ENCODE measurements at regions of chr6 and their contacts with region 1.

Region 1: DNA sequence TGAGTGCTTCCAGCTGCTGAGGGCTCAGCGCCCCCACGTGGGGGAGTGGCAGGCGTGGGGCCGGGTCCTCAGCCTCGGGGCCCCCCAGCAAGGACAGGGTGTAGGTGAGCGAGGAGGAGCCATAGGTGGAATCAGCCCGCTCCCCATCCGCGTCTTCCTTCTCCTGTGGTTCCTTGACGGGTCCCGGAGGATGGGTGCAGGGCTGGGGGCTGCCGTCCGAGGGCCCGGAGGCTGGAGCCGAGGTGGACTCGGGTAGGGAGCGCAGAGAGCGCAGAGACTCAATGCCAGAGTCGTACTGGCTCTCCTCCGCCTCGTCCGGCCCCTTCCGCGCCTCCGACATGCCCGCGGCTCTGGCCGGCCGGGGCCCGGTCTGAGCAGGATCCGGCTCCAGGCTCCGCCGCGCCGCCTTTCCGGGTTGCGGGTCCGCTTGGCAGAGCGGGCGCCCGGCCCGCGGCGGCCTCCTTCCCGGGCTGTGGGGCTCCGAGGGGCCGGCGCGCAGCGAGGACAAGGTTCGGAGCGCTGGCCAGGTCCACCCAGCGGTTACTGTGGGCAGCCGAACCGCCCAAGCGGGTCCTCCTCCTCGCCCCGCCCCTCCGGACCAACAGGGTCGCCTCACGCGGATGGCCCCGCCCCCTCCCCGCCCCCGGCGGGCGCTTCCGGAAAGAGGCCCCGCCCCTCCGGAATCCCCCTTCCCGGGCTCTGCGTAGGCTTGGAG is at the start of gene NFKBIE:
- DNase-seq: peak; percentile 93
- H3K4me3 Mint-ChIP-seq: peak within 1 kb of the TSS; percentile 98
- H3K27ac Mint-ChIP-seq: peak within 1 kb of the TSS; percentile 95
- H3K4me1 Mint-ChIP-seq: peaks cover 66% of the 10 kb centered on the region
- H3K27me3 Mint-ChIP-seq: peaks cover 15% of the 10 kb centered on the region
- total RNA-seq, gene NFKBIE: 23.2 and 29.0 TPM in 2 replicates

Region 2: DNA sequence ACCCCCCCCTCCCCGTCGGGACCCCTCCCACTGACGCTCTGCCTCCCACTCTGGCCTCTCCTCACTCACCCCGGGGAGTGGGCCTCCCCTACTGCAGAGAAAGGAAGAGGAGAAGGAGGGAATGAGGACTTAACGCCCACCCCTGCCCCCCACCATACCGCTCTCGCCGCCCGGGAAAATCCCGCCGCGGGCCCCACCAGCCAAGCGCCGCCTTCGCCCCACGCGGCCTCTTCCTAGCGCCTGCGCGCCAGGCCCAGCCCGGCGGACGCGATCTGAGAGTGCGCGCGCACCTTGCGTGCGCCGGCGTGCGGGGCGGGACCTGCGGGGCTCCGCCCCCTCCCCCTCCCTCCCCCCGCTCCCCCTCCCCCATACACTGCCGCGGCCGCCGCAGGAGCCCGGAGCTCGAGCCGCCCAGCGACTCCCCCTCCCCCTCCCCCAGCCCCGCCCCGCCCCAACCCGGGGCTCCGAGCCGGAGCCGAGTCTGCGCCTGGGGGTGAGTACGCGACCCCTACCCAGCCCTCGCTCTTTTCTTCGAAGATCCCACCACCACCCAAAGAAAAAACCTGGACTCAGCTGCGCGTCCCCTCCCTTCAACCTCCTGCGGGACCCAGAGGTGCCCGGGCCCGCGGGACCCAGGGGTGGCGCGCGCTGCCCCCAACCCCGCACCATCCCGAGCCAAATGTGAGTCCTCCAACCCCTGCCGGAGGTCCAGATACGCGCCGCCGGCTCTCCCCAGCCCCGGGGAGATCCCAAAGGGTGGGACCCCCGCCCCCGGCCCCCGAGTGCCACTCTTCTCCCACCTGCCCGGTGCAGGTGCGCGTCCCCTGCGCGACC is 137.8 kb before region 1 on chr6 and contains the starts of genes MRPL14 and TMEM63B:
- intact Hi-C with region 1: loop called (anchors 2 kb)
- DNase-seq: peak; percentile 89
- H3K4me3 Mint-ChIP-seq: peak within 1 kb of the TSS; percentile 90
- H3K27ac Mint-ChIP-seq: peak within 1 kb of the TSS; percentile 94
- H3K4me1 Mint-ChIP-seq: peaks cover 50% of the 10 kb centered on the region
- H3K27me3 Mint-ChIP-seq: no peaks in the 10 kb centered on the region
- total RNA-seq, gene MRPL14: 62.6 and 68.6 TPM in 2 replicates
- total RNA-seq, gene TMEM63B: 17.0 and 20.7 TPM in 2 replicates

Region 3: DNA sequence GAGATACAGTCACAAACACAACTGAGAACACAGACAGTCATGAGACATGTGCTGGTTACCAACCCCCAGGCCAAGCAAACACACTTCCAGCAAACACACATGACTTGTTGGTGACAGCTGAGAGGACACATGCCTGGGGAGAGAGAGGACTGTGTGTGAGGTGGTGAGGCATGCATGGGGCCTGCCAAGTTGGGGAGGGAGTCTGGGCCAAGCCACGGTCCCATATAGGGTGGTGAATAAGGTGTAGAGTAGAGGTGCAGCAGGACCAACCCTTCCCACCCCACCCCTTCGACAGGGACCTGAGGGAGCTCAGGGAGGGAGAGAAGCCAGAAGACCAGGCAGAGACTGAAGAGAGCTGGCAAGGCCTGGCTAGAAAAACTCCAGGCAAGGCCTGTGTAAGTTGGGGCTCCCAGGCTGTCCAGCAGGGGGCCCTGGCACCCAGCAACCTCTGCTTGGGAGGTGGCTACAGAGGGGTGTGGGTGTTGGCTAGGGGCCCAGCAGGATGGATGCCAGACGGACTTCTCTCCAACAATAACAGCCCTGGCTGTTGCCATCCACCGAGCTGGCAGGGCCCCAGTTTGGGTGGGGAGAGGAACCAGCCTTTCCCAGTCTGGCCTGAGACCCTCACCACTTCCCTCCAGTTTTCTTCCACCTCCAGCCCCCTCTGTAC is 43.7 kb before region 1 on chr6:
- intact Hi-C with region 1: loop called (anchors 1 kb)
- DNase-seq: peak; percentile 68
- H3K4me3 Mint-ChIP-seq: no peak overlapping the region
- H3K27ac Mint-ChIP-seq: peak overlapping the region; percentile 52
- H3K4me1 Mint-ChIP-seq: peaks cover 43% of the 10 kb centered on the region
- H3K27me3 Mint-ChIP-seq: peaks cover 11% of the 10 kb centered on the region

Region 4: DNA sequence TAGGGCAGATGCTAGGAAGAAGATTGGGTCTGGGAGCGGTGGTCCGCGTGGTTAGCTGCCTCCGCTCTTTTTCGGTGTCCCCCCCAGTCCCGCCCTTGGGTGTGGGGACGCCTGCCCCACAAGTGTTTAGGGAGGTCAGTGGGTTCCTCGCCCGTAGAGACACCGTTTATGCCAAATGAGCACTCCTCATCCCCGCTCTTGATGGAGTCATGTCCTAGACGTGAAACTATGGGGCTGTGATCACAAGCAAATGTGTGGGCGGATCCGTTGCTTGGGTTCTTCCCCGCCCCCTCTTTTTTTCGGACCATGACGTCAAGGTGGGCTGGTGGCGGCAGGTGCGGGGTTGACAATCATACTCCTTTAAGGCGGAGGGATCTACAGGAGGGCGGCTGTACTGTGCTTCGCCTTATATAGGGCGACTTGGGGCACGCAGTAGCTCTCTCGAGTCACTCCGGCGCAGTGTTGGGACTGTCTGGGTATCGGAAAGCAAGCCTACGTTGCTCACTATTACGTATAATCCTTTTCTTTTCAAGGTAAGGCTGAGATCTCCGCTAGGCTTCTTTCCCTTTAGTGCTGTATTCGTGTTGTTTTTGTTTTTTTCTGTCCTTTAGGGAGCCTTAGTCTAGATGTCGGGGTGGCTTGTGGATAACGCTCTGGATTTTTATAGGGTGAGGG is 18.4 kb before region 1 on chr6 and contains the start of gene HSP90AB1:
- intact Hi-C with region 1: loop called (anchors 1 kb)
- DNase-seq: peak; percentile 96
- H3K4me3 Mint-ChIP-seq: peak within 1 kb of the TSS; percentile 96
- H3K27ac Mint-ChIP-seq: peak within 1 kb of the TSS; percentile 98
- H3K4me1 Mint-ChIP-seq: peaks cover 45% of the 10 kb centered on the region
- H3K27me3 Mint-ChIP-seq: peaks cover 5% of the 10 kb centered on the region
- total RNA-seq, gene HSP90AB1: 2,065 and 2,095 TPM in 2 replicates

Region 5: DNA sequence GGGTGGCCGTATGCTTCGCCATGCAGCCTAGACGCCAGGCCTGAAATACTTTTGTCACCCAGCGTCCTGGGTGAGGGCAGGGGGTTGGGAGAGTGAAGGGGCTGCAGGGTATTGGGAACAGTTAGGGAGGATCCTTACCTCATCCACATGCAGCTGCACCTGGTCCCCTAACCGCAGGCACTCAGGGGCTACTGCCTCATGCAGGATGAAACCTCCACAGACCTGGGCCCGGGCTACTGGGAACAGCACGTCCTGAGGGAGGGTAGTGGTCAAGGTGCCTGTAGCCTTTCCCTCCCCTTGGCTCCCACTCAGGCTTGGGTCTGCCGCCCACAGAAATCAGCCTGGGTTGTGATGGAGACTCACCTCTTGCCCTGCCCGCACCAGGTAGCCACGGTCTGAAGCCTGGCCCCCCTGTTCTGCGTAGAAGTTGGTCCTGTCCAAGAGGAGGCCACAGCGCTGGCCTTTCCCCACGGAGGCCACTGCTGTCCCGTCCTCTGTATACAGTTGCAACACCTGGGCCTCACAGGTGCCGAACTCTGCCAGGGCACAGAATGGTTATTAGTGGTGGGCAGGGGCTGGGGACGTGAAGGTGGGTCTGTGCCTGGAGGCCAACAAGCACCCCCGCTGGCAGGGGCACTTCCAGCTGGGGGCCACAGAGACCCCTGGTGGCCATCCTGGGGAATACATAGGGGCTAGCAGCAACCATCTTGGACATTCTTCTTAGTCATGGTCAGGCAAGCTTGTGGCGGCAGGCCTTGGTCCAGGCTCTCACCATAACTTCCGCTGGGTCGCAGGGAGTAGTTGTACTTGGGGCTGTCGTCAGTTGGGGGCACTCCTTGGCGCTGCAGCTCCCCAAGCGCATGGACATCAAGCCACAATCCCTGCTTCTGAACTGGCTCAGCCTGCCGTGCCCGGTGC is 39.4 kb after region 1 on chr6:
- intact Hi-C with region 1: loop called (anchors 2 kb)
- DNase-seq: no peak
- H3K4me3 Mint-ChIP-seq: no peak overlapping the region
- H3K27ac Mint-ChIP-seq: no peak overlapping the region
- H3K4me1 Mint-ChIP-seq: no peaks in the 10 kb centered on the region
- H3K27me3 Mint-ChIP-seq: peaks cover 2% of the 10 kb centered on the region

Region 6: GRCh38 chr6:44338228-44339122 is 73.3 kb after region 1 on chr6:
- intact Hi-C with region 1: loop called (anchors 1 kb)
- DNase-seq: peak; percentile 55
- H3K4me3 Mint-ChIP-seq: no peak overlapping the region
- H3K27ac Mint-ChIP-seq: no peak overlapping the region
- H3K4me1 Mint-ChIP-seq: peaks cover 7% of the 10 kb centered on the region
- H3K27me3 Mint-ChIP-seq: peaks cover 32% of the 10 kb centered on the region

Region 7: DNA sequence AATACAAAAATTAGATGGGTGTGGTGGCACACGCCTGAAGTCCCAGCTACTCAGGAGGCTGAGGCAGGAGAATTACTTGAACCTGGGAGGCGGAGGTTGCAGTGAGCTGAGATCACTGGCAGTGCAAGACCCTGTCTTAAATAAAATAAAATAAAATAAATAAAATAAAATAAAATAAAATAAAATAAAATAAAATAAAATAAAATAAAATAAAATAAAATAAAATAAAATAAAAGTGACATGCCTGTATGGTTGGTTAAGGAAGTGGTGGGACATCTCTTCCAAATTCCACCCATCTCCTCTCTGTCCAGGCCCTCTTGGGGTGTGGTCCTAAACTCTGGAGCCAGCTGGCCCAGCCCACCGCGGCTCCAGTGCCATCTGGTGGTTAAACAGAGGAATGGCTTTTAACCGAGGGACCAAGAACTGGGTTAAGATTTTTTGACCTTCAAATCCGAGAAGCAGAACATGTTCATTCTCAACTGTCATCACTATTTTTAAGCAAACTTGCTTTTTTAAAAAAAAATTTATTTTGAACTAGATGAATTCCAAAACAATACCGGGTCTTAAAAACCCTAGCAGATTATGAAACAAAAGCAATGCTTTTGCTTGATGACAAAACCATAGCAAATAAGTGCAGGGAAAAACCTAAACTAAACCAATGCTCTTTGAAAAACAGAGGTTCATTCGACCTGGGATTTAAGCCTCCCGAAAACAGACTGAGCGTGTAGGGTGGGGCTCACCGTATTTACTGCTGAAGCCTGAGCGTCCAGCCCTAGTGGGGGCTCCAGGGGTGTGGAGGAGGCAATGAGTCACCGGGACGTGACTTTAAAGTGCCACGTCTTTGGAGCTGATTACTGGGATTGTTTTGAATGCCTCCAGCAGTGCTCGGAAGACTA is 191.2 kb after region 1 on chr6:
- intact Hi-C with region 1: loop called (anchors 2 kb)
- DNase-seq: no peak
- H3K4me3 Mint-ChIP-seq: no peak overlapping the region
- H3K27ac Mint-ChIP-seq: no peak overlapping the region
- H3K4me1 Mint-ChIP-seq: no peaks in the 10 kb centered on the region
- H3K27me3 Mint-ChIP-seq: peaks cover 5% of the 10 kb centered on the region

Measured in activated T-helper 1 cell treated with anti-CD3 and anti-CD28 coated beads, Interleukin-12 subunit alpha, Interleukin-12 subunit beta, Interleukin-2, Interleukin-4 antibody, amounts not matched to agents 30 ng/mL and 10 ng/mL and 1 ng/mL, durations not matched to agents 14 hours and 24 hours and 36 hours (primary cell).